Psoas muscle (tissue), 8 donors: ENCODE measurements at regions of chr1 and their contacts with region 1.

Region 1: GRCh38 chr1:234722904-234723720 is 113.1 kb upstream of the IRF2BP2 start:
- DNase-seq: peak; percentile 78 to 82
- ATAC-seq: peak; percentile 27 to 50 (median 30)
- H3K4me3 ChIP-seq: peak overlapping the region; percentile 44
- H3K27ac ChIP-seq: peak overlapping the region; percentile 94
- H3K4me1 ChIP-seq: peaks cover 84% of the 10 kb centered on the region
- H3K27me3 ChIP-seq: no peaks in the 10 kb centered on the region
- CTCF ChIP-seq: no peak

Region 2: DNA sequence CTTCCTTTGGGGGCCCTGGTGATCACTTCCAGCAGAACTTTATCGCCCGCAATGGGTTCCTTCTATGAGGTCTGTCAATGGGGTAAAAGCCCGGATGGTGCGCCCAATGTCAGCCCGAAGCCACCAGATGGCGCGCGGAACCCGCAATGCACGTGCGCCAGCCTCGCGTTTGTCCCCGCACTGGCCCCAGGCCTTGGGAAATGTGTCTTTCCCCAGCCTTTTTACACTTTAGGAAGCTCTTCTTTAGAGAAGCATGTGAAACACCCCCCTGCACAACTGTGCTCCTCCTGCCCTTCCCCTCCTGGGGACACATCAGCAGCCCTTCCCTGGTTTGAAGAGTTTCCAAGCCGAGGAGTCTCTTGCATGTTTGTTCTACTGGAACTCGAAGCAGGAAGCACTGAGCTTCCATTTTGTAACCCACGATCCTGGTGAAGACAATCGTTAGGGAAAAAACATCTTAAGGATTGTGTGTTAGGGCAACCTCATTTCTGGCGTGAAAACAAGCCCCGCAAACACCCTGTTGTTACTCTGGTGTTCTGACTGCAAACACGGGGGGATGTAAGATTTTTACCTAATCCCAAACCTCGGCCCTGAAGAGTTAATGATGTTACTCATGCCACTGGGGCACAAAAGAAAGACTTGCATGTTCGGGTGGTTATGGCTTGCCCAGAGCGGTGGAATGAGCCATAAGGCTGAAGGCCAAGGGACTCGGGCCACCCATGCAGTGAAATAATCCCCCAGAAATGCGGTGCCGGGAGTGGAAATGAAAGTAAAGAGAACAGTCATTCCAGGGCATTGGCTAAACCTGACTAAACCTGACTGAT is 223.8 kb before region 1 on chr1:
- intact Hi-C with region 1: loop called (anchors 2 to 5 kb)
- DNase-seq: peak; percentile 92 to 95
- ATAC-seq: peak; percentile 79 to 90 (median 86)
- H3K4me3 ChIP-seq: peak overlapping the region; percentile 47
- H3K27ac ChIP-seq: peak overlapping the region; percentile 95
- H3K4me1 ChIP-seq: peaks cover 53% of the 10 kb centered on the region
- H3K27me3 ChIP-seq: no peaks in the 10 kb centered on the region
- CTCF ChIP-seq: peak; percentile 93

Region 3: DNA sequence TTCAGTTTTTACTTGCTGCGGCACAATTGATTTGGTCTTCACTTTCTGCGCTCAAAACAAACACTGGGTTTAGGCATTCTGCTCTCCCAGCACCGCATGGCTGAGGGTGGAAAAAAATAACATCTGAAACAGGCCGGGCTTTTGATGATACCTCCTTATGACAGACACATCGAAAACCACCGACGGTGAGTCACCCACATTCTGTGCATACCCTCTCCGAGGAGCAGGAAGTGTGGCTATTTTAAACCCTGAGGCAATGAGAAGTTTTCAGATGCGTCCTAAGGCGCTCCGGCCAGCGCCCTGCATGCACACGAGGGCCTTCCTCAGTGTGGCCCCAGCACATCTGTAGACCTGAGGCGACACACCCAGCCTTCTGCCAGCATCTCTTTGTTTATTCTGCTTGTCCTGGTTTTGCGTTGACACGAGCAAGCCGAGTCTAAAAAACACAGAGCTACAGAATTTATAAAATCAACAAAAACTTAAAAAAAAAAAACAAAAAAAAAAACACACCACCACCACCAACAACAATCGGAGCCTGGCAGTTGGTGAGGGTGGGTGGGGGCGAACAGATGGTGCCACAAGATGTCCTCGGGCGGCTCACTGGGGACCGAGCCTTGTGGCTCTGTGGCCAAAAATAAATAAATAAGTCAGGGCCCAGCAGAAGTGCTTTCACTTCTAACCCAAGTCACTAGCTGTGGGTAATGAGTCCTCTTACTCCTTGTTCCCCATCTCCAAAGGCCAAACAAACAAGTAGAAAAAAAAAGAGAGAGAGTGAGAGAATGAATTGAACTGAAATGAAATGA is 49.4 kb after region 1 on chr1:
- intact Hi-C with region 1: loop called in 1 of 2 experiments (anchors 2 kb)
- DNase-seq: peak; percentile 75 to 87
- ATAC-seq: peak; percentile 98 to 99 (median 98)
- H3K4me3 ChIP-seq: peak overlapping the region; percentile 16
- H3K27ac ChIP-seq: peak overlapping the region; percentile 82
- H3K4me1 ChIP-seq: peaks cover 18% of the 10 kb centered on the region
- H3K27me3 ChIP-seq: peaks cover 0 to 13% (median 3%) of the 10 kb centered on the region in 3 donors
- CTCF ChIP-seq: no peak

Region 4: DNA sequence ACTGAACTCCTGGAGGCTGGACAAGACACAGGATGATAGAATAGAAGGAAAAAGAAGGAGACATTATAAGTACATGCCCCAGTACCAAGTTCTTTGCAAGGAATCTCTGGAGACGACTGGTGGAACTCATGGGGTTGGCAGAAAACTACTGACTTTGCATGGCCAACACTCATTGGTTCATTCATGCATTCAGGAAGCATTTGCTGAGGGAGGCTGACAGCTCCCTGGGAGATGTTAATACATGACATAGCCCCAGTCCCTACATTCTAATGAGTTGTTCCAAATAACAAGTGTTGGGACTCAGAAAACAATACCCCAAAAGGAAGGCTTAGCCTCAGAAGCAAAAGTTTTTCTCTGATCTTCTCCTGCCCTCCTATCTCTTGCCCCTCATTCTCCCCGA is 59.7 kb after region 1 on chr1:
- intact Hi-C with region 1: no loop called
- DNase-seq: no peak
- ATAC-seq: no peak
- H3K4me3 ChIP-seq: no peak overlapping the region
- H3K27ac ChIP-seq: no peak overlapping the region
- H3K4me1 ChIP-seq: peaks cover 3% of the 10 kb centered on the region
- H3K27me3 ChIP-seq: peaks cover 0 to 38% (median 7%) of the 10 kb centered on the region in 3 donors
- CTCF ChIP-seq: no peak

Region 5: GRCh38 chr1:234918181-234918841 is 195.2 kb after region 1 on chr1:
- intact Hi-C with region 1: loop called in 1 of 2 experiments (anchors 5 kb)
- DNase-seq: peak in 1 of 2 donors; percentile 31
- ATAC-seq: peak; percentile 5 to 42 (median 22)
- H3K4me3 ChIP-seq: no peak overlapping the region
- H3K27ac ChIP-seq: peak overlapping the region; percentile 82
- H3K4me1 ChIP-seq: peaks cover 63% of the 10 kb centered on the region
- H3K27me3 ChIP-seq: no peaks in the 10 kb centered on the region
- CTCF ChIP-seq: no peak

Region 6: GRCh38 chr1:234978397-234979295 is 255.5 kb after region 1 on chr1:
- intact Hi-C with region 1: loop called in 1 of 2 experiments (anchors 10 kb)
- DNase-seq: peak; percentile 54 to 77
- ATAC-seq: peak in 2 of 4 donors; percentile 15 to 39
- H3K4me3 ChIP-seq: no peak overlapping the region
- H3K27ac ChIP-seq: peak overlapping the region; percentile 86
- H3K4me1 ChIP-seq: peaks cover 63% of the 10 kb centered on the region
- H3K27me3 ChIP-seq: no peaks in the 10 kb centered on the region
- CTCF ChIP-seq: no peak